ENCODE measurements at regions of chr16 and their contacts with region 1.

Region 1: GRCh38 chr16:84527504-84528269 is 23.2 kb upstream of the MEAK7 start:
- DNase-seq: no peak
- ATAC-seq: peak; percentile 53
- H3K4me3 ChIP-seq: no peak overlapping the region
- H3K4me3 Mint-ChIP-seq: no peak overlapping the region
- H3K27ac ChIP-seq: no peak overlapping the region
- H3K27ac Mint-ChIP-seq: peak overlapping the region in 3 of 9 donors; percentile 26 to 71 (median 69)
- H3K4me1 ChIP-seq: no peaks in the 10 kb centered on the region
- H3K4me1 Mint-ChIP-seq: peaks cover 4 to 24% (median 16%) of the 10 kb centered on the region in 7 donors
- H3K27me3 ChIP-seq: no peaks in the 10 kb centered on the region
- H3K27me3 Mint-ChIP-seq: no peaks in the 10 kb centered on the region

Region 2: DNA sequence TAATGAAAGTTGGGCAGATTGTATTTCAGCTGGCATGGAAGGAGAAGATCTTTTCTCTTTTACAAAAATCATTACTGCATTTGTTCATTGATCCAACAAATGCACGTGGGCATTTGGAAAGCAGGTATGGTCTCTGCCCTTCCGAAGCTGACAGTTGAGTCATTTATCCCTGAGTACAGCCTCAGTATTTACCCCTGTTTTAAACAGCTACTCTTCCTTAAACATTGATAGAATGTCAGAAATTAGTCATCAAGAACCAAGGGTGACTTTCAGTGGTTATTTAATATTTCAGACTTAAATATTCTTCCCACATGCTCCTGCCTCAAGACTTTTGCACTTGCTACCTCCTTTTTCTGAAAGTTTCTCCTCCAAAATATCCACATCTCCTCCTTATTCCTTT is 946.6 kb before region 1 on chr16:
- CTCF ChIA-PET with region 1: no interaction called
- POLR2A ChIA-PET with region 1: no interaction called
- intact Hi-C with region 1: no loop called
- DNase-seq: no peak
- ATAC-seq: no peak
- H3K4me3 ChIP-seq: no peak overlapping the region
- H3K4me3 Mint-ChIP-seq: no peak overlapping the region
- H3K27ac ChIP-seq: no peak overlapping the region
- H3K27ac Mint-ChIP-seq: no peak overlapping the region
- H3K4me1 ChIP-seq: no peaks in the 10 kb centered on the region
- H3K4me1 Mint-ChIP-seq: no peaks in the 10 kb centered on the region
- H3K27me3 ChIP-seq: no peaks in the 10 kb centered on the region
- H3K27me3 Mint-ChIP-seq: peaks cover 0 to 16% (median 6%) of the 10 kb centered on the region in 5 donors

Region 3: GRCh38 chr16:84541999-84542817 is 14.5 kb after region 1 on chr16:
- CTCF ChIA-PET with region 1: interaction called, 6 read pairs
- POLR2A ChIA-PET with region 1: interaction called, 10 read pairs
- intact Hi-C with region 1: no loop called
- DNase-seq: no peak
- ATAC-seq: no peak
- H3K4me3 ChIP-seq: no peak overlapping the region
- H3K4me3 Mint-ChIP-seq: no peak overlapping the region
- H3K27ac ChIP-seq: no peak overlapping the region
- H3K27ac Mint-ChIP-seq: peak overlapping the region in 2 of 9 donors; percentile 2 to 22
- H3K4me1 ChIP-seq: peaks cover 0 to 18% of the 10 kb centered on the region in 2 donors
- H3K4me1 Mint-ChIP-seq: peaks cover 18 to 56% (median 33%) of the 10 kb centered on the region in 7 donors
- H3K27me3 ChIP-seq: no peaks in the 10 kb centered on the region
- H3K27me3 Mint-ChIP-seq: no peaks in the 10 kb centered on the region

Region 4: GRCh38 chr16:84577034-84577803 is 49.5 kb after region 1 on chr16:
- CTCF ChIA-PET with region 1: no interaction called
- POLR2A ChIA-PET with region 1: no interaction called
- intact Hi-C with region 1: no loop called
- DNase-seq: no peak
- ATAC-seq: no peak
- H3K4me3 ChIP-seq: no peak overlapping the region
- H3K4me3 Mint-ChIP-seq: peak overlapping the region in 1 of 10 donors; percentile 25
- H3K27ac ChIP-seq: peak overlapping the region; percentile 26
- H3K27ac Mint-ChIP-seq: peak overlapping the region in 8 of 9 donors; percentile 17 to 80 (median 70)
- H3K4me1 ChIP-seq: peaks cover 0 to 24% of the 10 kb centered on the region in 2 donors
- H3K4me1 Mint-ChIP-seq: peaks cover 30 to 61% (median 44%) of the 10 kb centered on the region in 7 donors
- H3K27me3 ChIP-seq: no peaks in the 10 kb centered on the region
- H3K27me3 Mint-ChIP-seq: no peaks in the 10 kb centered on the region

Region 5: DNA sequence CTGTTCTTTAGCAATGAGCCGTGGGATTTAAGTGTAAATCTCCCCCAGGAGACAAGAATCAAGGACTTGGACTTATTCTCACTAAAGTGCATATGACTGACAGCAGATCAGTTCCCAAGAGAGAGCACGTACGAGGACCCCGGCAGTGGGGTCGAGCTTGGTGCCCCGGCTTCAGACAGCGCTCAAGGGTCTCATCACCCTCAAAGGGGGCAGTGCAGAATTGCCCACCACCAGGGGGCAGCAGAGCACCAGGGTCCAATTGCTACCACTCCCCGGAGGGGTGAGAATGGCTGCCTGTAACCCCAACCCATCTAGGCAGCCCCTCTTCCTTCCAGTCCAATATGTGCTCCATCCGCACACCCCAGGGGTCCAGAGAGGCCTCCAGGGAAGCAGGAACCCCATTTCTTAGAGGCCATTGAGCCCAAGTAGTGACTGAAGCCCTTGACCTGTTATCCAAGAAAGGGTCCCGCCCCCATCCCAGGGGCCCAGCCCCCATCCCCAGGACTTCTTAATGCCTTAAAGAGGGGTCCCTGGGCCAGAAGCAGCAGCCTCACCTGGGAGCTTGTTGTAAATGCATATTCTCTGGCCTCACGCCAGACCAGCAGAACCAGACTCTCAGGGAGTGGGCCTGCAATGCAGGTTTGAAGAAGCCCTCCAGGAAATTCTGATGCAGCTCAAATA is 397.5 kb after region 1 on chr16:
- CTCF ChIA-PET with region 1: no interaction called
- POLR2A ChIA-PET with region 1: no interaction called
- intact Hi-C with region 1: no loop called
- DNase-seq: peak; percentile 23 to 74 (median 57)
- ATAC-seq: peak; percentile 71
- H3K4me3 ChIP-seq: no peak overlapping the region
- H3K4me3 Mint-ChIP-seq: no peak overlapping the region
- H3K27ac ChIP-seq: no peak overlapping the region
- H3K27ac Mint-ChIP-seq: no peak overlapping the region
- H3K4me1 ChIP-seq: no peaks in the 10 kb centered on the region
- H3K4me1 Mint-ChIP-seq: peaks cover 0 to 4% (median 0%) of the 10 kb centered on the region in 7 donors
- H3K27me3 ChIP-seq: no peaks in the 10 kb centered on the region
- H3K27me3 Mint-ChIP-seq: no peaks in the 10 kb centered on the region

Measured in naive thymus-derived CD4-positive, alpha-beta T cell (primary cell).